Psoas muscle (tissue), 8 donors: ENCODE measurements at regions of chr18 and their contacts with region 1.

Region 1: GRCh38 chr18:55234366-55235093 is 275.3 kb upstream of the CCDC68 start:
- DNase-seq: peak; percentile 73 to 80
- ATAC-seq: peak; percentile 82 to 95 (median 90)
- H3K4me3 ChIP-seq: no peak overlapping the region
- H3K27ac ChIP-seq: peak overlapping the region; percentile 48
- H3K4me1 ChIP-seq: peaks cover 17% of the 10 kb centered on the region
- H3K27me3 ChIP-seq: no peaks in the 10 kb centered on the region
- CTCF ChIP-seq: peak; percentile 84

Region 2: DNA sequence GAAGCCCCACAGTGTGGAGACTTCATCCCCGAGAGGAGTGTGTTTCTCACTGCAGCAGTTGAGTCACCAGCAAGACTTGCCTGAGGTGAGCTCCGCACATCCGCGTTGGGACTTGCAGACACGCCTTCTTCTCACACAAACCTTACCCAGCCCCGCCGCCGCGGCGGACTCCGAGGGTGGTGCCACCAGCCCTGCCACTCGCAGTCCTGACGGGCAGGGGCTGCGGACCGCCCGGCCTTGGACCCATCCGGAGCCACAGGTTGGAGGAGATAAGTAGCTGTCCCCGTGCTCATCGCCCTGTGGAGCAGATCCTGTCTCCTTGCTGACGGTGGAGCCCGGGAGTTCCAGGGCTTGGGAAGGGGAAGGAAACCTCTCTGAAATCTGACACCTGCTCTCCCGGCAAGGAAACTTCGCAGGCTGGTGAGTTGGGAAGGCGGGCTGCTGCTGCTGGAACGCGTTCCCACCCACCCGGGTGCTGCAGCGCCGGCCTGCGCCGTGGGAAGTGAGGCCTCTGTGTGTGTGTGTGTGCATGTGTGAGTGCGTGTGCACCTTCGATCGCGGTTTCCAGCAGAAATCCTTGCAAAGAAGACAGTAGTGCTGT is 406.1 kb before region 1 on chr18 and contains the start of gene RAB27B:
- intact Hi-C with region 1: no loop called
- DNase-seq: peak; percentile 33 to 72
- ATAC-seq: peak; percentile 17 to 66 (median 54)
- H3K4me3 ChIP-seq: peak within 1 kb of the TSS; percentile 51
- H3K27ac ChIP-seq: no peak within 1 kb of the TSS
- H3K4me1 ChIP-seq: no peaks in the 10 kb centered on the region
- H3K27me3 ChIP-seq: peaks cover 0 to 5% (median 0%) of the 10 kb centered on the region in 3 donors
- CTCF ChIP-seq: no peak
- total RNA-seq, gene RAB27B: 0.05 to 0.20 (median 0.12) TPM

Region 3: GRCh38 chr18:55119434-55119833 is 115.1 kb before region 1 on chr18:
- intact Hi-C with region 1: no loop called
- DNase-seq: no peak
- ATAC-seq: no peak
- H3K4me3 ChIP-seq: no peak overlapping the region
- H3K27ac ChIP-seq: no peak overlapping the region
- H3K4me1 ChIP-seq: no peaks in the 10 kb centered on the region
- H3K27me3 ChIP-seq: no peaks in the 10 kb centered on the region
- CTCF ChIP-seq: no peak

Region 4: GRCh38 chr18:55415258-55415871 is 180.8 kb after region 1 on chr18:
- intact Hi-C with region 1: loop called (anchors 2 to 10 kb)
- DNase-seq: peak; percentile 88 to 92
- ATAC-seq: peak; percentile 86 to 92 (median 90)
- H3K4me3 ChIP-seq: peak overlapping the region; percentile 20
- H3K27ac ChIP-seq: peak overlapping the region; percentile 32
- H3K4me1 ChIP-seq: peaks cover 63% of the 10 kb centered on the region
- H3K27me3 ChIP-seq: no peaks in the 10 kb centered on the region
- CTCF ChIP-seq: peak; percentile 94

Region 5: DNA sequence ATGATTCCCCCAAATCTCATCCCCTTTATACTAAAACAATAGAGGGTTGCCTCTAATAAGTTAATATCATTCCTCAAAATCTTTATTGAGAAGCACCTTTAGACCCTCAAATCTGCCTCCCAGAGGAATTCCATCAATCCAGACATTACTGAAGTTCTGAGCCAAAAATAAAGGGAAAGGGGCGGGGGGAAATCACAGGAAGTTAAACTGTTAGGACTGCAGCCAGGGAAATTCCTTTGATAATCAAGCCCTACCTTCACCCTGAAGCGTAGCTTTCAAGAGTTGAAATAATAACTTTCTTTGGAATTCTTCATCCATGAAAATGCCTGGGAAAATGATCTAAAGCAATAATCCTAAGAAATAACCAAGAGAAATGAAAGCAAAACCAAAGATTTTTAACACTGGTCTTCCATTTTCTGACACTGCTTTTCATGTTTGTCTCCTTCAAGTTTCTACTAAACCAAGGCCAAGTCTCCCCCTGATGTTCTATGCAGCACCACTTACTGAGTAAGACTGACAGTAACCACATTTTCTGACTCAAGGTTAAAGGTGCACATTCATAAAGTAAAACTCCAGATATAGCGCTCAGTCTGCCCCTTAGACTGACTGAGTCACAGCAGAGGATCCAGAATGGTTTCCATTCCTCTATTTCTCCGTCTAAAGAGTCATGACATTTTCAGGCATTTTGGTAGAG is 275.2 kb after region 1 on chr18:
- intact Hi-C with region 1: loop called in 1 of 2 experiments (anchors 10 kb)
- DNase-seq: no peak
- ATAC-seq: peak; percentile 17 to 66 (median 38)
- H3K4me3 ChIP-seq: peak overlapping the region; percentile 22
- H3K27ac ChIP-seq: peak overlapping the region; percentile 72
- H3K4me1 ChIP-seq: peaks cover 18% of the 10 kb centered on the region
- H3K27me3 ChIP-seq: no peaks in the 10 kb centered on the region
- CTCF ChIP-seq: no peak

Region 6: DNA sequence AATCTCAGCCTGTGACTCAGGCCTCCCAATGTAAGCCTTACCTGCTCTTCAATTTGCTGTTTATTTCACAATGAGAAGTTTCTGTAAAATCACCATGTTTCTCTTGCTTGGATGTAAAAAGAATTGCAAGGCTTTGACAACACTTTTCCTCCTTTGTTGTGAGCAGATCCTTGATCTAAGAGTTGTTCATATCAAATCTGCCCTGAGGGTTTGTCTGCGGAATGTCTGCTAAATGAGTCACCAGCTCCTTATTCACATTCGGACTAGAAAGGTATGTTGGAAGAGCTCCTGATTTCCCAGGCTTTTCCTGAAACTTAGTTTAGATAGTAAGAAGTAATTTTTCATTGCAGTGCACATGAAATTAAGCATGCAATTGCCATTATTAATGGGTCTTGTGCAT is 621.7 kb after region 1 on chr18:
- intact Hi-C with region 1: loop called in 1 of 2 experiments (anchors 10 kb)
- DNase-seq: no peak
- ATAC-seq: no peak
- H3K4me3 ChIP-seq: no peak overlapping the region
- H3K27ac ChIP-seq: no peak overlapping the region
- H3K4me1 ChIP-seq: no peaks in the 10 kb centered on the region
- H3K27me3 ChIP-seq: peaks cover 0 to 23% (median 3%) of the 10 kb centered on the region in 3 donors
- CTCF ChIP-seq: no peak